ENCODE measurements at regions of chr3 and their contacts with region 1.

Region 1: DNA sequence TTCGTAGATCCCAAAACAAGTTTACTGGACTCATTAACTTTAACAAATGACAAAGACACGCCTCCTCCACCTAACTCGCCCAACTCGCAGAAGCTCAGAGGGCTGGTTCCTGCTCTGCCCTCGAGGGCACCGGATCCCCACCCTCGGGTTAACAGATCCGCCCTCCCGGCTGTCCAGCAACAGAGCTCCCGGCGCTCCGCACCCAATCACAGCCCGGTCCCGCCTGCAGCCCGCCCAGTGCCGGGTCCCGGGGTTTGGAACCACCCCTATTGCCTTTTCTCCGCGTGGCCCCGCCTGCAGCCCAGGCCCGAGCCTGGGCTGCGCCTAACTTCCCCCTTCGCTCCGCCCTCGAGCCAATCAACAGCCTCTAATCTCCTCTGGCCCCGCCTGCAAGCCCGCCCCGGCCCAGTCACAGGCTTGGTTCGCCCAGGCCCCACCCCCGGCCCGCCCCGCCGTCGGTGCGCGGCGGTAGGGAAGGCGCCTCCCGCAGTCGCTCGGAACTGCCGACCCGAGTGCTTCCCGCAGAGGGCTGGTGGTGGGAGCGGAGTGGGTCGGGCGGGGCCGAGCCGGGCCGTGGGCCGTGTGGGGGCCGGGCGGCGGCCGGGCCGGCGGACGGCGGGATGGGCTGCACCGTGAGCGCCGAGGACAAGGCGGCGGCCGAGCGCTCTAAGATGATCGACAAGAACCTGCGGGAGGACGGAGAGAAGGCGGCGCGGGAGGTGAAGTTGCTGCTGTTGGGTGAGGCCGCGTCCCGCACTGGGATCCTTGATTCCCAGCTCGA is at the start of gene GNAI2:
- DNase-seq: peak; percentile 99
- H3K4me3 Mint-ChIP-seq: peak within 1 kb of the TSS; percentile 98
- H3K27ac Mint-ChIP-seq: peak within 1 kb of the TSS; percentile 83
- H3K4me1 Mint-ChIP-seq: peaks cover 46% of the 10 kb centered on the region
- H3K27me3 Mint-ChIP-seq: no peaks in the 10 kb centered on the region
- CTCF ChIP-seq: no peak
- total RNA-seq, gene GNAI2: 122 and 123 TPM in 2 replicates

Region 2: DNA sequence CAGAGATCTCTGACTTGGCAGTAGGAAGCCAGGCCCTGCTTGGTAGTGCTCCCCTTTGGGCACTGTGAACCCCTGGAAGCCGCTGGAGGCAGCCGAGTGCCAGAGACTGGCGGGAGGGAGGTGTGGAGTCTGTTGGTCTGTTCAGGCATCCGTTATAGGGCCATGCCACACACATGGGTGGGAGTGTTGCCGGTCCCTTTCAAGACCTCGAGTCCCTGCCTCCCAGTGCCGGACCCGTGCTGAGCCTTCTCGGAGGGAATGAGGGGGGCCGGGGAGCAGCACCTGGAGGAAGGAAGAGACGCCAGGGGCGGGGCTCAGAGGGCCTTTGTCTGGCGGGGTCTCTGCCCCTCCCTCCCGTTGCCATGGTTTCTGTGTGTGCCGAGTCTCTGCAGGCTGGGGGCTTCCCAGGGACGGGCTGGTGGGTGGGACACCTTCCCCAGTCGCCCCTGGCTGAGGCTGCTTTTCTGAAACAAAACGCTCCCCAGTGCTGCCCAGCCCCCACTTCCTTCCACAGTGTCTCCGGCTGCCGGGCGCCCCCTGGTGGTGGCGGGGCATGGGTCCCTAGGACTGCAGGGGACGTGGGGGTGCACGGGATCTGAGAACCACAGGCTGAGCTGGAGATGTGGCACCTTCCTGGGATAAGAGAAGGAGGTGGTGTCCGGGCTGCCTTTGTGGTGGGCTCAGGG is 10.1 kb after region 1 on chr3:
- CTCF ChIA-PET with region 1: interaction called, 107 read pairs
- POLR2A ChIA-PET with region 1: interaction called, 102 read pairs
- intact Hi-C with region 1: loop called (anchors 1 kb)
- DNase-seq: peak; percentile 91
- H3K4me3 Mint-ChIP-seq: peak overlapping the region; percentile 55
- H3K27ac Mint-ChIP-seq: peak overlapping the region; percentile 91
- H3K4me1 Mint-ChIP-seq: peaks cover 54% of the 10 kb centered on the region
- H3K27me3 Mint-ChIP-seq: no peaks in the 10 kb centered on the region
- CTCF ChIP-seq: peak; percentile 98

Region 3: GRCh38 chr3:50251220-50251619 is 15.3 kb after region 1 on chr3:
- CTCF ChIA-PET with region 1: interaction called, 107 read pairs
- POLR2A ChIA-PET with region 1: interaction called, 102 read pairs
- intact Hi-C with region 1: loop called (anchors 1 kb)
- DNase-seq: peak; percentile 96
- H3K4me3 Mint-ChIP-seq: peak overlapping the region; percentile 23
- H3K27ac Mint-ChIP-seq: peak overlapping the region; percentile 92
- H3K4me1 Mint-ChIP-seq: peaks cover 42% of the 10 kb centered on the region
- H3K27me3 Mint-ChIP-seq: no peaks in the 10 kb centered on the region
- CTCF ChIP-seq: no peak

Region 4: GRCh38 chr3:50327943-50328691 is 92.2 kb after region 1 on chr3 and contains the start of gene TUSC2:
- CTCF ChIA-PET with region 1: interaction called, 3 read pairs
- POLR2A ChIA-PET with region 1: interaction called, 13 read pairs
- intact Hi-C with region 1: no loop called
- DNase-seq: peak; percentile 97
- H3K4me3 Mint-ChIP-seq: peak within 1 kb of the TSS; percentile 86
- H3K27ac Mint-ChIP-seq: peak within 1 kb of the TSS; percentile 90
- H3K4me1 Mint-ChIP-seq: no peaks in the 10 kb centered on the region
- H3K27me3 Mint-ChIP-seq: no peaks in the 10 kb centered on the region
- CTCF ChIP-seq: no peak
- total RNA-seq, gene TUSC2: 14.5 and 20.4 TPM in 2 replicates

Region 5: GRCh38 chr3:50365080-50365841 is 129.4 kb after region 1 on chr3:
- CTCF ChIA-PET with region 1: no interaction called
- POLR2A ChIA-PET with region 1: no interaction called
- intact Hi-C with region 1: no loop called
- DNase-seq: peak; percentile 84
- H3K4me3 Mint-ChIP-seq: peak overlapping the region; percentile 67
- H3K27ac Mint-ChIP-seq: peak overlapping the region; percentile 57
- H3K4me1 Mint-ChIP-seq: no peaks in the 10 kb centered on the region
- H3K27me3 Mint-ChIP-seq: no peaks in the 10 kb centered on the region
- CTCF ChIP-seq: no peak